Testis (tissue), 5 donors: ENCODE measurements at regions of chr7 and their contacts with region 1.

Region 1: DNA sequence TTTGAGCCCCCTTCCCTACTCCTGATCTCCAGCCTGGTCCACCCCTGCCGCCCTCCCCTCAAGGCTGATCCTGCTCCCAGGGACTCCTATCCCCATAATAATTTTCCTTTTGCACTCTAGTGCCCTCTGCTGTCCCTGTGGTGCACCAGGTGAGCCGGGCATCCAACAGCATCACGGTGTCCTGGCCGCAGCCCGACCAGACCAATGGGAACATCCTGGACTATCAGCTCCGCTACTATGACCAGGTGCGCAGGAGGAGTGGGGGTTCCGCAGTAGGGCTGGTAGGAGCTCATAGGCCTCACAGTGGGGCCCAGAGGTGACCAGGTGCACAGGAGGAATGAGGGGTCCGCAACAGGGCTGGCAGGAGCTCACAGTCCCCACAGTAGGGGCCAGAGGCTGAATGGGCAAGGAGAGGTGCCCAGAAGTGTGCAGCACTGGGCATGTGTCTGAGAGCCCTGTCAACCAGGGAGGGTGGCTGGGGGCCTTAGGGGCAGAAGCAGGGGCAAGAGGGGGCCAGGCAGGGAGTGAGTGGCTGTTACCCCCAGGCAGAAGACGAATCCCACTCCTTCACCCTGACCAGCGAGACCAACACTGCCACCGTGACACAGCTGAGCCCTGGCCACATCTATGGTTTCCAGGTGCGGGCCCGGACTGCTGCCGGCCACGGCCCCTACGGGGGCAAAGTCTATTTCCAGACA is 11.6 kb downstream of the EPHB6 start:
- DNase-seq: no peak
- H3K4me3 ChIP-seq: no peak overlapping the region
- H3K27ac ChIP-seq: no peak overlapping the region
- H3K4me1 ChIP-seq: no peaks in the 10 kb centered on the region
- H3K27me3 ChIP-seq: no peaks in the 10 kb centered on the region
- CTCF ChIP-seq: peak; percentile 13 to 39 (median 25)
- POLR2A ChIP-seq: no peak

Region 2: GRCh38 chr7:142697270-142697669 is 169.2 kb before region 1 on chr7:
- intact Hi-C with region 1: no loop called
- DNase-seq: no peak
- H3K4me3 ChIP-seq: no peak overlapping the region
- H3K27ac ChIP-seq: no peak overlapping the region
- H3K4me1 ChIP-seq: no peaks in the 10 kb centered on the region
- H3K27me3 ChIP-seq: no peaks in the 10 kb centered on the region
- CTCF ChIP-seq: no peak
- POLR2A ChIP-seq: no peak

Region 3: DNA sequence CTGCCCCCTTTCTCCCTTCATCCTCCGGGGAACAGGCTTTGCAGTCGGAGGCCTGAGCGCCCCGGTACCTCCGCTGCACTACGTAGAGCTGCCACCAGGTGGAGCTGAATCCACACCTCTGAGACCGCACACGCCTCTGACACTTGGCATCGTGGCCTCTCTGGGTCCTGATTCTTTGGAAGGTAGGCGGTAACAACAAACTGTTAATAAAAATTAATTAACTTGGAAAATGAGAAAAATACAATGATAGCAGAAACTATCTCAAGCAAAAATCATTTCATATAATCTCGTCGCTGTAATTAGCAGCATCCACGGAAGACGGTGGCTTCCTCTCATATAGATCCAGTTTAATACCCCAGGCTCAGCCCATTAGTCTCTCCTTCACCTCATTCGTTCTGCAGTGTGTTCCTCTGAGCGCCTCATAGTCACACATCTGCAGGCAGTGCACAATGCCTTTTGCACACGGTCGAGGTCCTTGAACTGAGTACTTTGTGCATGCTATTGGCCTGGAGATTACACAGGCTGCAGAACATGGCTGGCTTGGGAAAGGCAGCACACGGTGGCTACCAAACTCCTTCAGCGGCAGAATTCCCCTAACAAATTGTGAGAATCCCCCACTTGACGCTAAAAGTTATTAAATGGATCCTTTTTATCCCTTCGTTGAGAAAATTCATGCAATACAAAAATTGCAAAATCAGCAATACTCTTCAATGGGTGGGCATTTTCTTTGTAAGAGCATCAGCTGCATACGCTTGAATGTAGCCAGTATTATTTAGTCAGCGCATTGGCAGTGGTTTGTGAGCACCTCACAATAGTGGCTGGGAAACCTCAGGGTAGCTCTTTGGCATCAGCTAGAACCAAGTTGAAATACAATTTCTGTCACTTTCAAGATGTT is 141.7 kb after region 1 on chr7:
- intact Hi-C with region 1: loop called (anchors 10 kb)
- DNase-seq: peak; percentile 91
- H3K4me3 ChIP-seq: no peak overlapping the region
- H3K27ac ChIP-seq: no peak overlapping the region
- H3K4me1 ChIP-seq: peaks cover under 1% of the 10 kb centered on the region
- H3K27me3 ChIP-seq: no peaks in the 10 kb centered on the region
- CTCF ChIP-seq: peak; percentile 96 to 98 (median 97)
- POLR2A ChIP-seq: no peak